ENCODE measurements at regions of chr4 and their contacts with region 1.

Region 1: GRCh38 chr4:39134683-39135319 is 47.5 kb upstream of the WDR19 start:
- DNase-seq: no peak
- ATAC-seq: peak in 1 of 4 donors; percentile 11
- H3K4me3 ChIP-seq: no peak overlapping the region
- H3K27ac ChIP-seq: no peak overlapping the region
- H3K4me1 ChIP-seq: peaks cover 0 to 6% (median under 1%) of the 10 kb centered on the region in 4 donors
- H3K27me3 ChIP-seq: no peaks in the 10 kb centered on the region
- CTCF ChIP-seq: no peak
- POLR2A ChIP-seq: no peak

Region 2: GRCh38 chr4:38856524-38857337 is 278.1 kb before region 1 on chr4 and contains the start of gene TLR6:
- intact Hi-C with region 1: no loop called
- DNase-seq: peak in 1 of 3 donors; percentile 64
- ATAC-seq: peak; percentile 83 to 90 (median 86)
- H3K4me3 ChIP-seq: peak within 1 kb of the TSS; percentile 0 to 35 (median 18)
- H3K27ac ChIP-seq: peak within 1 kb of the TSS; percentile 22 to 61 (median 42)
- H3K4me1 ChIP-seq: peaks cover 0 to 4% (median 0%) of the 10 kb centered on the region in 4 donors
- H3K27me3 ChIP-seq: no peaks in the 10 kb centered on the region
- CTCF ChIP-seq: peak; percentile 81 to 83 (median 82)
- POLR2A ChIP-seq: no peak
- total RNA-seq, gene TLR6: 1.2 to 3.4 (median 2.4) TPM

Region 3: DNA sequence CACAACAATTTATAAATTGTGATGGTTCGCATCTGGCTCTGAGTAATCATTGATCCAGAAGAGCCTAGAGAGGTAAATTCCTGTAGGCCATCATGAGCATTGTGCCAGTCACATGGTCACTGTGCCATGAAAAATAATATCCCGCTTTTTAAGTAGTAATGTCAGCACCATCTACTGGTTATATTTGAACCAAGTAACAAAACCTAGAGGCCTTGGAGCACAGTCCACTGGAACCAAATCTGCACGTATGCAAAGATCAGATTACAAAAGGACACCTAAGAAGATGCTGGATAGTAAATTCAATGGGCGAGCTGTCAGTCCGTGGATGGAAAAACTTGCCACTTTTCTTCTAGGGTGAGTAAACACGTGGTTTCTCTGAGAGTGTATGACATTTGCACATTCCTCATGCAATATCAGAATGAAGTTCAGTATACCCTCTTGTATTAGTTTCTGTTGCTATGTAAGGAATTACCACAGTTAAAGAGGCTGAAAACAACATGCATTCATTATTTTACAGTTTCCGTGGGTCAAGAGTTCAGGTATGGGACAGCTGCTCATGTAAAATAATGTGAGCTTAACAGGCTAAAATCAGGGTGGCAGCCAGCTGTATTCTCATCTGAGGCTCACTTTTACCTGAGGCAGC is 240.3 kb before region 1 on chr4:
- intact Hi-C with region 1: loop called in 1 of 2 experiments (anchors 10 kb)
- DNase-seq: no peak
- ATAC-seq: peak in 1 of 4 donors; percentile 12
- H3K4me3 ChIP-seq: no peak overlapping the region
- H3K27ac ChIP-seq: no peak overlapping the region
- H3K4me1 ChIP-seq: peaks cover 0 to 22% (median 8%) of the 10 kb centered on the region in 4 donors
- H3K27me3 ChIP-seq: no peaks in the 10 kb centered on the region
- CTCF ChIP-seq: peak in 1 of 4 donors; percentile 7
- POLR2A ChIP-seq: no peak

Region 4: DNA sequence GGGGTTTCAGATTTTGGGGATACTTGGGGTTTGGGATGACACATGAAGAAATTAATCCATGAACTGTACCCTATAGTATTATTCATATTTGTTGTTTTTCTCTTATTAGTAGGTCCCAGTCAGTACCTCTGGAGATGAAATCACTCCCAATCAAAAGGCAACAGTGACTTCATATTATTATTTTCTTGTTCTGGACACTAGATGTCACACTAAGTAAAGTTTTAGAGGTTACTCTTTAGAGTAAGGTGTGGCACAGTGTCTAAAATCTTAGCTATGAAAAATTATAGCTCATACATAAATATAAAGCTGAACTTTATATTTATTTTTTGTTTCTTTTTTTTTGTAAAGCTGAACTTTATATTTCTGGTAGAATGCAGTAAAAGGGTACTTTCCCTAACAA is 232.1 kb before region 1 on chr4:
- intact Hi-C with region 1: loop called (anchors 10 kb)
- DNase-seq: no peak
- ATAC-seq: peak; percentile 47 to 58 (median 54)
- H3K4me3 ChIP-seq: no peak overlapping the region
- H3K27ac ChIP-seq: peak overlapping the region in 2 of 3 donors; percentile 75 to 77
- H3K4me1 ChIP-seq: peaks cover 0 to 41% (median 20%) of the 10 kb centered on the region in 4 donors
- H3K27me3 ChIP-seq: no peaks in the 10 kb centered on the region
- CTCF ChIP-seq: peak; percentile 31 to 49 (median 43)
- POLR2A ChIP-seq: no peak

Region 5: DNA sequence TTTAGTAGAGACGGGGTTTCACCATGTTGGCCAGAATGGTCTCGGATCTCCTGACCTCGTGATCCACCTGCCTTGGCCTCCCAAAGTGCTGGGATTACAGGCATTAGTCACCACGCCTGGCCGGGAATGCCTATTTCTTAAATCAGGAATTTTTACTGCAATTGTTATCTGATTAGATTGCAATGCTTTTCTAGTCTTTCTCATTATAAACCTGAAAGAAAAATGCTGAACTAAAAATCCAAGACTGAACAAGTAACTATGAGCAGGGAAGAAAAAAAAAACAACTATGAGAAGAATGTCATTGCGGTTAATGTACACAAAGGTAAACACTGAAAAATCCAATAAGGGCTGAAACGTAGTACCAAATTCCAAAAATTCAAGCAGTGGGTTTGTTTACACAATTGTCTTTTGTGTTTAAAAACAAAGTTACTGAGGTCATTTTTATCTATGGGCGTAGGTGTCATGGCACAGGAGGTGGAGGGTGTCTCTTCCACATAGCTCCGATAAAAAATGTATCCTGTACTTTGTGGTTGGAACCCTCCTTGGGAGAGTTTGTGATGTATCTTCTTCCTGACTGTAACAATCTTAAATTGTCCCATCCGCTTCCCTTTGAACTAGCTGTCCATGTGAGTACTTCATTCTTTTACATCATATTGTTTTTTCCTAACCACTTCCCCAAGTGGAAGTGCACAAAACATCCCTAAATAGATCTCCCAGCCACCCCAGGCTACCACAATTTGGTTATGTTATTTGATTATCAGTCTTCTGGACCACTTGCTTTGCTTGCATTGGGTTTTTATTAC is 91.5 kb before region 1 on chr4:
- intact Hi-C with region 1: no loop called
- DNase-seq: peak in 1 of 3 donors; percentile 40
- ATAC-seq: peak in 2 of 4 donors; percentile 14 to 19
- H3K4me3 ChIP-seq: no peak overlapping the region
- H3K27ac ChIP-seq: peak overlapping the region; percentile 79 to 95 (median 85)
- H3K4me1 ChIP-seq: peaks cover 0 to 18% (median 2%) of the 10 kb centered on the region in 4 donors
- H3K27me3 ChIP-seq: no peaks in the 10 kb centered on the region
- CTCF ChIP-seq: no peak
- POLR2A ChIP-seq: no peak

Region 6: GRCh38 chr4:39295784-39296183 is 161.0 kb after region 1 on chr4:
- intact Hi-C with region 1: no loop called
- DNase-seq: no peak
- ATAC-seq: no peak
- H3K4me3 ChIP-seq: no peak overlapping the region
- H3K27ac ChIP-seq: no peak overlapping the region
- H3K4me1 ChIP-seq: no peaks in the 10 kb centered on the region
- H3K27me3 ChIP-seq: no peaks in the 10 kb centered on the region
- CTCF ChIP-seq: no peak
- POLR2A ChIP-seq: no peak